ENCODE measurements at regions of chr9 and their contacts with region 1.

Region 1: GRCh38 chr9:36023260-36024048 is 13.3 kb upstream of the RECK start:
- DNase-seq: peak; percentile 80
- H3K4me3 ChIP-seq: no peak overlapping the region
- H3K27ac ChIP-seq: no peak overlapping the region
- H3K4me1 ChIP-seq: no peaks in the 10 kb centered on the region
- H3K27me3 ChIP-seq: no peaks in the 10 kb centered on the region
- CTCF ChIP-seq: peak; percentile 70 to 86 (median 78)
- EP300 ChIP-seq: no peak
- POLR2A ChIP-seq: no peak

Region 2: GRCh38 chr9:35954942-35955546 is 68.4 kb before region 1 on chr9:
- in situ Hi-C with region 1: loop called in 2 of 4 experiments (anchors 5 to 10 kb)
- intact Hi-C with region 1: no loop called
- DNase-seq: peak; percentile 68
- H3K4me3 ChIP-seq: no peak overlapping the region
- H3K27ac ChIP-seq: no peak overlapping the region
- H3K4me1 ChIP-seq: peaks cover 0 to 14% (median 5%) of the 10 kb centered on the region in 4 donors
- H3K27me3 ChIP-seq: no peaks in the 10 kb centered on the region
- CTCF ChIP-seq: peak; percentile 85 to 89 (median 88)
- EP300 ChIP-seq: no peak
- POLR2A ChIP-seq: no peak

Region 3: DNA sequence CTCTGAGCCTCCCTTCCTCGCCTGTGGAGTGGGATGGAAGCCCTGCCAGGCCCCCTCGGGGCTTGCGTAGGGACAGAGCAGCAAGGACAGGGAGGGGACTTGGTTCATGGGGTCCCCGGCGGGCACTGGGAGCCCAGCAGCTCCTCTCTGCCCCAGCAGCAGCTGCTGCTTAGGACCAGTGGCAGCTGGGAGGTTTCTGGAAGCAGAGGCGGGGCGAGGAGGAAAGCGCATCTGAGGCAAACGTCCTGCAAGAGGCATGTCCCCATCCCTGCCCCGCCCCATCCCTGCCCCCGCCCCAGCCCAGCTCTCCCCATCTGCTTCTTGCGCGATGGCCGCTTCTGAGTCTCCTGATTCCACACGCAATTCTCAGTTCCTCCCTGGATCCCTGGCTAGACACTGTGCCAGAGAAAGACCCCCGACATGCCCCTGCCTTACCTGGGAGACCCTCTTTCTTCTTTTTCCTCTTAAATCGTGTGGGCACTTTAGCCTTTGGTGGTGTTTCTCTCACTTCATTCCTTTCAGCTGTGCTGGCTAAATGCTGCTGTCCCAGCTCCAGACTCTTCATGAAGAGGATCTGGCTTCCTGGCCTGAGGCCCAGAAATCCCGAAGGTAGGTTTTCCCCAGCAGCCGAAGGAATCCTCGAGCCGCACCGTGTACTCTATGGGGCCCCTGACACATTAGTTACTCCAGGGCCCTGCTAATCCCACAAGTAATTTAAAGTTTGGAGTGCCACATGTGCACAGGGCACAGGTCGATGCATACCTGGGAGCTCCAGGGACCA is 61.1 kb before region 1 on chr9:
- in situ Hi-C with region 1: loop called in 2 of 4 experiments (anchors 5 to 10 kb)
- intact Hi-C with region 1: no loop called
- DNase-seq: peak; percentile 37
- H3K4me3 ChIP-seq: no peak overlapping the region
- H3K27ac ChIP-seq: peak overlapping the region; percentile 41 to 58 (median 50)
- H3K4me1 ChIP-seq: peaks cover 9 to 31% (median 23%) of the 10 kb centered on the region in 4 donors
- H3K27me3 ChIP-seq: no peaks in the 10 kb centered on the region
- CTCF ChIP-seq: no peak
- EP300 ChIP-seq: no peak
- POLR2A ChIP-seq: no peak

Measured in transverse colon (tissue), 4 donors.